Activated CD4-positive, alpha-beta T cell treated with anti-CD3 and anti-CD28 coated beads, Interleukin-2, amount 10 ng/mL, durations not matched to agents 7 days and 5 days (primary cell): ENCODE measurements at regions of chr17 and their contacts with region 1.

Region 1: GRCh38 chr17:55314784-55315491 is 50.2 kb downstream of the HLF start:
- DNase-seq: peak; percentile 6
- H3K4me3 Mint-ChIP-seq: no peak overlapping the region
- H3K27ac Mint-ChIP-seq: no peak overlapping the region
- H3K4me1 Mint-ChIP-seq: peaks cover 11% of the 10 kb centered on the region
- H3K27me3 Mint-ChIP-seq: peaks cover 8% of the 10 kb centered on the region

Region 2: GRCh38 chr17:55348749-55349354 is 33.9 kb after region 1 on chr17:
- CTCF ChIA-PET with region 1: interaction called, 10 read pairs
- POLR2A ChIA-PET with region 1: no interaction called
- DNase-seq: peak; percentile 48
- H3K4me3 Mint-ChIP-seq: no peak overlapping the region
- H3K27ac Mint-ChIP-seq: no peak overlapping the region
- H3K4me1 Mint-ChIP-seq: peaks cover 54% of the 10 kb centered on the region
- H3K27me3 Mint-ChIP-seq: peaks cover under 1% of the 10 kb centered on the region